Stomach (tissue), 19 donors: ENCODE measurements at regions of chr11 and their contacts with region 1.

Region 1: GRCh38 chr11:67312187-67313103 is 9.1 kb downstream of the SSH3 start:
- DNase-seq: peak; percentile 84
- H3K4me3 ChIP-seq: no peak overlapping the region
- H3K27ac ChIP-seq: peak overlapping the region; percentile 60 to 84 (median 71)
- H3K4me1 ChIP-seq: peaks cover 15 to 33% (median 24%) of the 10 kb centered on the region in 4 donors
- H3K27me3 ChIP-seq: no peaks in the 10 kb centered on the region
- CTCF ChIP-seq: no peak
- EP300 ChIP-seq: no peak
- POLR2A ChIP-seq: no peak

Region 2: GRCh38 chr11:67262731-67263675 is 49.4 kb before region 1 on chr11:
- intact Hi-C with region 1: loop called (anchors 5 kb)
- DNase-seq: peak; percentile 86 to 93
- H3K4me3 ChIP-seq: no peak overlapping the region
- H3K27ac ChIP-seq: peak overlapping the region; percentile 20 to 67 (median 40)
- H3K4me1 ChIP-seq: peaks cover 28 to 46% (median 44%) of the 10 kb centered on the region in 4 donors
- H3K27me3 ChIP-seq: no peaks in the 10 kb centered on the region
- CTCF ChIP-seq: peak in 5 of 7 experiments; percentile 69 to 85 (median 83)
- EP300 ChIP-seq: no peak
- POLR2A ChIP-seq: no peak